ENCODE measurements at regions of chr20 and their contacts with region 1.

Region 1: DNA sequence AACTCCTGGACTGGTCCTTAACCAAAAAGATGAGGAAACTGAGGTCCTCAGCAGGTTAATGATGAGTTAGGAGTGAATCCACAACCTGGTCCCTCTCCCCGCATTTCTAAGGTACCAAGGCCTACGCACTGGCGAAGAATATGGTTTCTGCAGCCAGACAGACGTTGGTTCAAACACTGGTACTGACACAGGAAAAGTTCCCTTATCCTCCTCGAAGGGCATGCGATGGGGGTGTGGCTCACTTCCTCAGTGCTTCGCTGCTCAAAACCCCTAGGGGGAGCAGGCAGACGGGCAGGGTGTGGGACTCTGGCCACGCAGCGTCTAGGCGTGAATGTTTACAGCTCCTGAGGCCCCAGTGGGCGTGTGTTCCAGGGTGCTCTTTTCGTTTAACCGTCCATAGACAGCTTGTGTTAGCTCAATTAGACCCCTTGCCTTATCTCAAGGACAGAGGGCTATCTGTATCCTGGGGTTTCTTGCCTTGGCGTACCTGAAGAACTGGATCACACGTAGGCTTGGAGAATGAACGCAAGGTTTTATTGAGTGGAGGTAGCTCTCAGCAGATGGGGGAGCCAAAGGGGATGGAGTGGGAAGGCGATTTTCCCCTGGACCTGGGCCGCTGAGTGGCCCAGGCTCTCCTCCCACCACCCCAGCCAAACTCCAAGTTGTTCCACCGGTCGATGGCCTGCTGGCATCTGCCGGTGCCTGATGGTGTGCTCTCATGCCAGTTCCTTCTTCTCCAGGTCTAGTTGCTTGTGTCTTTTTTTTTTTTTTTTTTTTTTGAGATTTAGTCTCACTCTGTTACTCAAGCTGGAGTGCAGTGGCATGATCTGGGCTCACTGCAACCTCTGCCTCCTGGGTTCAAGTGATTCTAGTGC is 31.8 kb upstream of the PTPN1 start:
- DNase-seq: peak; percentile 88
- ATAC-seq: peak; percentile 100
- H3K4me3 Mint-ChIP-seq: no peak overlapping the region
- H3K27ac Mint-ChIP-seq: peak overlapping the region; percentile 49
- H3K4me1 Mint-ChIP-seq: peaks cover 54% of the 10 kb centered on the region
- H3K27me3 Mint-ChIP-seq: no peaks in the 10 kb centered on the region

Region 2: GRCh38 chr20:50338479-50339391 is 139.7 kb before region 1 on chr20:
- CTCF ChIA-PET with region 1: no interaction called
- DNase-seq: peak; percentile 93
- ATAC-seq: peak; percentile 82
- H3K4me3 Mint-ChIP-seq: peak overlapping the region; percentile 22
- H3K27ac Mint-ChIP-seq: peak overlapping the region; percentile 90
- H3K4me1 Mint-ChIP-seq: peaks cover 58% of the 10 kb centered on the region
- H3K27me3 Mint-ChIP-seq: peaks cover 14% of the 10 kb centered on the region

Region 3: GRCh38 chr20:50366270-50367103 is 111.9 kb before region 1 on chr20:
- CTCF ChIA-PET with region 1: no interaction called
- DNase-seq: peak; percentile 61
- ATAC-seq: peak; percentile 49
- H3K4me3 Mint-ChIP-seq: no peak overlapping the region
- H3K27ac Mint-ChIP-seq: no peak overlapping the region
- H3K4me1 Mint-ChIP-seq: peaks cover 11% of the 10 kb centered on the region
- H3K27me3 Mint-ChIP-seq: peaks cover 38% of the 10 kb centered on the region

Region 4: DNA sequence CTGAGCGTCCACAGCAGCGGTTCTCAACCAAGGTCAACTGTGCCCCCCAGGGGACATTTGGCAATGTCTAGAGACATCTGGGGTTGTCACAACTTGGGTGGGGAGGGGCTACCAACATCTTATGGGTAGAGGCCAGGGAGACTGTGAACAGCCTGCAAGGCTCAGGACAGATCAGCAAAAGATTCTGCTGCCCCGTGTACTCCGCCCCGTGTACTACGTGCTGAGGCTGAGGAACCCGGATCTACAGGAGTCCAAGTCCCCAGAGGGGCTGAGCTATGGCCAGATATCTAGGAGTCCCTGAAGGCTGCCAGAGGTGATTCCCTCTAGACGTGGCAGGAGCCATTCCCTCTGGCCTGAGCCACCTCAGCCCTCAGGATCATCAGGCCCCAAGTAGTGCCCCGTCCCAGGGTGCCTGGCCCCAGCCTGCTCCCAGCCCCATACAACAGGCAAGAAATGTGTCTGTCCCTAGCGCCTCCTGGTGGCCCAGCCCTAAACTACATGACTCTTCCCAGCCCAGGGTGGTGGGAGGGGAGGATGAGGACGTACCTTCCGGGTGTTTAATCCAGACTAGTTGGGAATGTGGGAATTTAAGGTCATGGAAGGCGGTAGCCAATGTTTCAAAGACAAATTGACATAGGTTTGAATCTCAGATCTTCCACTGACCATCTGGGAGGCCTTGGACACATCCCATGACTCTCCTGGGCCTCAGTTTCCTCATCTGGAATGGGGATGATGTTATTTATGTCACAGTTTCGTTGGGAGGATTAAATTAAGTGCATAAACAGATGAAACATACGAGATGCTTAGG is 17.7 kb before region 1 on chr20:
- CTCF ChIA-PET with region 1: interaction called, 12 read pairs
- DNase-seq: peak; percentile 87
- ATAC-seq: peak; percentile 88
- H3K4me3 Mint-ChIP-seq: no peak overlapping the region
- H3K27ac Mint-ChIP-seq: no peak overlapping the region
- H3K4me1 Mint-ChIP-seq: peaks cover 24% of the 10 kb centered on the region
- H3K27me3 Mint-ChIP-seq: peaks cover 27% of the 10 kb centered on the region

Region 5: DNA sequence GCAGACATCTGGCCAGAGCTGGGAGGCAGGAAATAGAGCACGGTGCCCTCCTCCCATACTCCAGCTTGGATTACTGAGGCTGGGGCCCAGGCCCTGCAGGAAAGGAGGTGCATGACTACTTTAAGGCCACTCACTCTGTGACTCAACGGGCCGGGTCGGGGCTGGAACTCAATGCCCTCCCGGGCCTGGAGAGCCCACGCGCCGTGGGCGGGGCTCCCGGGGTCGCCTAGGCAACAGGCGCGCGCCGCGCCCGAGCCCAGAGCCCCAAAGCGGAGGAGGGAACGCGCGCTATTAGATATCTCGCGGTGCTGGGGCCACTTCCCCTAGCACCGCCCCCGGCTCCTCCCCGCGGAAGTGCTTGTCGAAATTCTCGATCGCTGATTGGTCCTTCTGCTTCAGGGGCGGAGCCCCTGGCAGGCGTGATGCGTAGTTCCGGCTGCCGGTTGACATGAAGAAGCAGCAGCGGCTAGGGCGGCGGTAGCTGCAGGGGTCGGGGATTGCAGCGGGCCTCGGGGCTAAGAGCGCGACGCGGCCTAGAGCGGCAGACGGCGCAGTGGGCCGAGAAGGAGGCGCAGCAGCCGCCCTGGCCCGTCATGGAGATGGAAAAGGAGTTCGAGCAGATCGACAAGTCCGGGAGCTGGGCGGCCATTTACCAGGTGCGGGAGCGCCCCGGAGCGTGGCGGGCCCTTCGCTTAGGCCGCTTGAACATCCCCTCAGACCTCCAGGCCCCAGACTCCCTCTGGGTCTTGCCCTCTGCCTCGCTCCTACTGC is 31.7 kb after region 1 on chr20 and contains the start of gene PTPN1:
- CTCF ChIA-PET with region 1: interaction called, 32 read pairs
- DNase-seq: peak; percentile 99
- ATAC-seq: peak; percentile 90
- H3K4me3 Mint-ChIP-seq: peak within 1 kb of the TSS; percentile 95
- H3K27ac Mint-ChIP-seq: peak within 1 kb of the TSS; percentile 81
- H3K4me1 Mint-ChIP-seq: peaks cover 41% of the 10 kb centered on the region
- H3K27me3 Mint-ChIP-seq: no peaks in the 10 kb centered on the region
- total RNA-seq, gene PTPN1: 62.5 to 74.7 TPM

Region 6: GRCh38 chr20:50516180-50516934 is 38.0 kb after region 1 on chr20:
- CTCF ChIA-PET with region 1: interaction called, 32 read pairs
- DNase-seq: no peak
- ATAC-seq: no peak
- H3K4me3 Mint-ChIP-seq: peak overlapping the region; percentile 76
- H3K27ac Mint-ChIP-seq: peak overlapping the region; percentile 95
- H3K4me1 Mint-ChIP-seq: peaks cover 88% of the 10 kb centered on the region
- H3K27me3 Mint-ChIP-seq: no peaks in the 10 kb centered on the region

Region 7: GRCh38 chr20:50569864-50570836 is 91.8 kb after region 1 on chr20:
- CTCF ChIA-PET with region 1: interaction called, 25 read pairs
- DNase-seq: peak; percentile 69
- ATAC-seq: peak; percentile 89
- H3K4me3 Mint-ChIP-seq: no peak overlapping the region
- H3K27ac Mint-ChIP-seq: peak overlapping the region; percentile 81
- H3K4me1 Mint-ChIP-seq: peaks cover 52% of the 10 kb centered on the region
- H3K27me3 Mint-ChIP-seq: no peaks in the 10 kb centered on the region

Region 8: DNA sequence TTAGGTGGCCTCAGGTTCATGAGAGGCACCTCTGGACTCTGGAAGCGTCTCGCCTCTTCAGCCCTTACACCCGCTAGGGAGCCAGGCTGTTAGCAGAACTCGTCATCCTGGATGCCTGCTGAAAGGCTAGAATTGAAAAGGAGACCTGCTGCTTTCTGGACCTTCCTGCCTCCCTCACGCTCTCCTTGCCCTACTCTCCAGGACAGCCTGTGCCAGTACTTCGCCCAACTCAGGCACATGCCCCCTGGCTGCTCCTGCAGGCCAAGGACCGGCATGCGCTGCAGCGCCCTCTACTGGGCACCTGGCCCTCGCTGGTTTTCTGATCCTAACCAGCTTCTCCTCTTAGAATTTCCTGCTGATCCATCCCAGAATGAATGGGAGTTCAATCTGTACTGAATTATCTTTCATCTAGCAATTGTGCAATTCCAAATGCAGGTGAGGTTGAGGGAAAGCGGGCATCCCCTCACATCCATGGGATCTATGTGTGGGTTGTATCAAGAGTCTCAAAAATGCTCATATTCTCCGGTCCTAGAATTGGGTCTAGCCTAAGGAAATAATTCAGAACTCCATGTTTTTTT is 109.7 kb after region 1 on chr20:
- CTCF ChIA-PET with region 1: interaction called, 15 read pairs
- DNase-seq: peak; percentile 79
- ATAC-seq: peak; percentile 72
- H3K4me3 Mint-ChIP-seq: no peak overlapping the region
- H3K27ac Mint-ChIP-seq: no peak overlapping the region
- H3K4me1 Mint-ChIP-seq: peaks cover 4% of the 10 kb centered on the region
- H3K27me3 Mint-ChIP-seq: no peaks in the 10 kb centered on the region

Region 9: DNA sequence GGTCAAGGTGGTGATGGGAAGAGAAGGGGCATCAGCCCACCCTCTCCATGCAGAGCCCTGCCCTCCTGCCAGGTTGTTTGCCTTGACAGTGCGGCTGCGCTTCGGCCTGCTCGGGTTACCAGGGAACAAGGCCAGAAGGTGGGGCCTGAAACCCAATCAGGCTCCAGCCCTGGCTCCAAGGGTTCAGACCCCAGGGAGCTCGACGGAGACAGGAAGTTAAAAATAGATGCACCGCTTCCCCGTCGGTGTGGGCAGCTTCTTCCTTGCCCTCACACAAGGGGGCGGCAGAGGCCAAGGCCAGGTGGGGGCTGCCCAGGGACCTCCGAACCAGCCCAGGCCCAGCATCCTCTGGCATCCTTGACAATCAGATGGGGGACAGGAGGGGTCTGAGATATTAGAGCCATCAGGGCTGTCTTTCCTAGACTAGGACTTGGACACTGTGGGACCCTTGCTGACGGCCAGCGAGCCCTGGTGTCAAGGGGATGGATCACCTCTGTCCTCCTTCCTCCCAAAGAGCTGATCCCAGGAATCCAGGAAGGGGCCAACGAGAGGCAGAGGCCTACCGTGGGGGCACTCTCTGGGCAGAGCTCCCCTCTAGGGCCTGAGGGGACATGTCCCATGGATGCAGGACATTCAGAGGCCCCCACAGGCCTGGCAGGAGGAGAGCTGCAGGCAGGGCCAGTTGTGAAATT is 147.7 kb after region 1 on chr20:
- CTCF ChIA-PET with region 1: no interaction called
- DNase-seq: peak; percentile 47
- ATAC-seq: peak; percentile 61
- H3K4me3 Mint-ChIP-seq: no peak overlapping the region
- H3K27ac Mint-ChIP-seq: no peak overlapping the region
- H3K4me1 Mint-ChIP-seq: no peaks in the 10 kb centered on the region
- H3K27me3 Mint-ChIP-seq: no peaks in the 10 kb centered on the region

Region 10: DNA sequence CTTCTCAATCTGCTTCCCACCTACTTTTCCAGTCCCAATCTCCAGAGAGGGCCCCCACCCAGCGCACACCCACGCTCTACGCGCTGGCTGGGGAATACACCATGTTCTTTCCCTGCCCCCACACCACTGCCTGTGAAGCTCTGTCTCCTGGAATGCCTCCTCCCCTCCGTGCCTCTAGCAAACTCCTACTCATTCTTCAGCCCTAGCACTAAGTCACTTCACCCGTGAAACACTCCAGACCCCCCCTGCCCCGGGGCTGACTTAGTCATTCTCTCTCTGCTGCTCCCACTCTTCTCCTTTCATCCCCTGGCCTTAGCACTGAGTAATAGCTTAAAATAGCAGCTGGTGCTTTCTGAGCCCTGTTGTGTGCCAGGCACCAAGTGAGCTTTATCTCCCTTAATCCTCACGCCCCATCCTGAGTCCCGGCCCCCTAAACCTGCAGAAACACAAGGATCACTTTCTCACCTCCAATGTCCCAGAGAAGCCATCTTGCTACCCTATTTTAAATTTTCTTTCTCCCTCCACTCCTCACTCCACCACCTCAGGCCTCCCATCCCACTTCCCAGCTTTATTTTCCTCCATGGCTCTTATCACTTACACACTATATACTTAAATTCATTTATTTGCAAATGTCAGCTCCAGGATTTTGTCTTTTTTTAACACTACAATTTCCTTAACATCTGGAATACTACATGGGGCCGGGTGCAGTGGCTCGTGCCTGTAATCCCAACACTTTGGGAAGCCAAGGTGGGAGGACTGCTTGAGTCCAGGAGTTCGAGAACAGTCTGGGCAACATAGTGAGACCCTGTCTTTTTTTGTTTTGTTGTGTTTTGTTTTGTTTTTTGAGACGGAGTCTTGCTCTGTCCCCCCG is 246.7 kb after region 1 on chr20:
- CTCF ChIA-PET with region 1: no interaction called
- DNase-seq: no peak
- ATAC-seq: peak; percentile 45
- H3K4me3 Mint-ChIP-seq: no peak overlapping the region
- H3K27ac Mint-ChIP-seq: no peak overlapping the region
- H3K4me1 Mint-ChIP-seq: peaks cover 6% of the 10 kb centered on the region
- H3K27me3 Mint-ChIP-seq: no peaks in the 10 kb centered on the region

Measured in activated CD8-positive, alpha-beta memory T cell treated with anti-CD3 and anti-CD28 coated beads, Interleukin-2, amount 10 ng/mL, durations not matched to agents 7 days and 5 days (primary cell).